PC-3 (cell line): ENCODE measurements at regions of chr18 and their contacts with region 1.

Region 1: DNA sequence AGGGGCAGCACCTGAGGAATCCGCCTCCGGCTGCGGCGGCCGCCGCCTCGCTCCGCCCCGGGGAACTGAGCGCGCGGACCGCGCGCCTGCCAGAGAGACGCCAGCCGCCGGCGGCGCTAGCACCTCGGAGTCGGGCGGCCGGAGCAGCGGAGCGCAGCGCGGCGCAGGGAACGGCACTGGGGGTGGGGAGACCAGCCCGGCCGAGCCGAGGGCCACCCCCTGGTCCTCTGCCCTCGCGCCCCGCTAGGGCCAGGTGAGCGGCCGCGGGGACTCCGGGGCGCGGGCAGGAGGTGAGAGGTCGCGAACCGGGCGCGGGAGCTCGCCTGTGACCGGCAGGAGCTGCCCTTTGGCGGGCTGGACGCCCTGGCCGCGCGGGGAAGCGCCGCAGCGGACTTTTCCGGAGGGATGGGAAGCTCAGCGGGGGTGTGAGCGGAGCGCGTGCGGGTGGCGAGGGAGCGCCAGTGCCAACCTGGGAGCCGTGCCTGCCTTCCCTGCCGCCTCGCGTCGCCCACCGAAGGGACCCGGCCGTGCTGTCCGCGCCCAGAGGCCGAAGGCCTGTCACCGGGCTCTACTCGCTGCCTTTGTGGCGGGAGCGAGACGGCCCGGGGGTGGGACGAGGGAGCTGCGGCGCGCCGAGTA is at the start of gene GREB1L:
- DNase-seq: peak; percentile 85
- ATAC-seq: peak; percentile 89
- H3K4me3 ChIP-seq: peak within 1 kb of the TSS; percentile 87
- H3K27ac ChIP-seq: peak within 1 kb of the TSS; percentile 44
- H3K4me1 ChIP-seq: peaks cover 16% of the 10 kb centered on the region
- H3K27me3 ChIP-seq: no peaks in the 10 kb centered on the region
- CTCF ChIP-seq: no peak; the same call in 1 of the 2 replicates
- total RNA-seq, gene GREB1L: 6.3 and 10.3 TPM in 2 replicates

Region 2: GRCh38 chr18:21218630-21219261 is 23.5 kb before region 1 on chr18:
- CTCF ChIA-PET with region 1: no interaction called
- POLR2A ChIA-PET with region 1: no interaction called
- intact Hi-C with region 1: no loop called
- DNase-seq: no peak
- ATAC-seq: no peak
- H3K4me3 ChIP-seq: no peak overlapping the region
- H3K27ac ChIP-seq: no peak overlapping the region
- H3K4me1 ChIP-seq: peaks cover 12% of the 10 kb centered on the region
- H3K27me3 ChIP-seq: no peaks in the 10 kb centered on the region
- CTCF ChIP-seq: no peak

Region 3: GRCh38 chr18:21230436-21230835 is 11.8 kb before region 1 on chr18:
- CTCF ChIA-PET with region 1: no interaction called
- POLR2A ChIA-PET with region 1: no interaction called
- intact Hi-C with region 1: no loop called
- DNase-seq: no peak
- ATAC-seq: no peak
- H3K4me3 ChIP-seq: no peak overlapping the region
- H3K27ac ChIP-seq: no peak overlapping the region
- H3K4me1 ChIP-seq: no peaks in the 10 kb centered on the region
- H3K27me3 ChIP-seq: no peaks in the 10 kb centered on the region
- CTCF ChIP-seq: no peak

Region 4: GRCh38 chr18:21444465-21445023 is 202.3 kb after region 1 on chr18:
- CTCF ChIA-PET with region 1: interaction called, 3 read pairs
- POLR2A ChIA-PET with region 1: no interaction called
- intact Hi-C with region 1: loop called (anchors 1 kb)
- DNase-seq: peak; percentile 78
- ATAC-seq: peak; percentile 78
- H3K4me3 ChIP-seq: no peak overlapping the region
- H3K27ac ChIP-seq: no peak overlapping the region
- H3K4me1 ChIP-seq: peaks cover 14% of the 10 kb centered on the region
- H3K27me3 ChIP-seq: no peaks in the 10 kb centered on the region
- CTCF ChIP-seq: peak; percentile 95

Region 5: GRCh38 chr18:21509062-21509461 is 266.8 kb after region 1 on chr18:
- CTCF ChIA-PET with region 1: no interaction called
- POLR2A ChIA-PET with region 1: no interaction called
- intact Hi-C with region 1: no loop called
- DNase-seq: no peak
- ATAC-seq: peak; percentile 38; the same call in 1 of the 2 replicates
- H3K4me3 ChIP-seq: no peak overlapping the region
- H3K27ac ChIP-seq: no peak overlapping the region
- H3K4me1 ChIP-seq: no peaks in the 10 kb centered on the region
- H3K27me3 ChIP-seq: no peaks in the 10 kb centered on the region
- CTCF ChIP-seq: no peak